HCT116 (cell line): ENCODE measurements at regions of chr14 and their contacts with region 1.

Region 1: DNA sequence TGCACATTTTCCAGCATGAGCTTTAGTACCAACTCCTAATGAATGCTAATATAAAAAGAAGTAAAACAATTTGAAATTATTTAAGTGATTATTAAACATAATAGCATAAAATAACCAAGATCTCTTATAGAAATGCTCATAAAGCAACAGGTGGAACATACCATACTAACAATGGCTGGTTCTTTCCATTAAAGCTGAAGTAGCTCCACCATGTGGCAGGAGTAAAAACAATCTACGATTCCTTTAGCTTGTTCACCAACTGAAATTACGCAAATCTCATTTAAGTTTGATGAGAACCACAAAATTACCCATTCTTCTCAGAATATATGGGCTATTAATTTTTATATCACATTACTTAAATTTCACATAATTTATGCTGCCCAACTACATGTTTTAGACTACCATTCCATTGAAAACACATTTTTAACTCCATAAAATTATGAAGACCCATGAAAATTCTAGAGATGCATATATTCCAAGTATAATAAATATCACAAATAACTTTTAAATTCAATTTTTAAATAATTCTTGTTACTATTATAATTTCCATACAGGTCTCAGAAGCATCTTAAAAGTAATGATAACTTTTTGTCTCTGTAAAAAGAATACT is 213.6 kb downstream of the DAD1 start:
- DNase-seq: peak; percentile 53
- ATAC-seq: peak; percentile 49; the same call in 1 of the 2 replicates
- H3K4me3 ChIP-seq: no peak overlapping the region
- H3K27ac ChIP-seq: no peak overlapping the region
- H3K4me1 ChIP-seq: no peaks in the 10 kb centered on the region
- H3K27me3 ChIP-seq: peaks cover 56% of the 10 kb centered on the region
- CTCF ChIP-seq: peak; percentile 63 to 71 (median 65)
- POLR2A ChIP-seq: no peak
- RAD21 ChIP-seq: peak; percentile 65

Region 2: DNA sequence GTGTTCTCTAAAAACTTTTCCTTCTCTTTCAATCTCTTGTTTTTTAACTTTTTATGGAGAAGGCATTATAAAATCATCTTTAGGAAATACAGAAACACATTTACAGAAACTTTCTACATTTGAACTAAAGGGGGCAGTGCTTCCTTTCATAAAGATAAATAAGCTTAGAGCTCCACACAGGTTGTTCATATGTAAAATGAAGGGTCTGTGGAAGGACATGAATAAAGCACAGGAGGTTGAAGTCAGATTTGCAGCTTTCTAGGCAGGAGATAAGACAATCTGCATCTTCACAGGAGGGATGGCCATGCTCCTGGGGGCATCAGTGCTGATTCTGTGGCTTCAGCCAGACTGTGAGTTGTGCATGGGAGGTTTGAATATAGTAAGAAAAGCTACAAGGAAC is 212.4 kb before region 1 on chr14:
- CTCF ChIA-PET with region 1: interaction called, 11 read pairs
- POLR2A ChIA-PET with region 1: no interaction called
- RAD21 ChIA-PET with region 1: no interaction called
- intact Hi-C with region 1: no loop called
- DNase-seq: no peak
- ATAC-seq: no peak
- H3K4me3 ChIP-seq: no peak overlapping the region
- H3K27ac ChIP-seq: no peak overlapping the region
- H3K4me1 ChIP-seq: no peaks in the 10 kb centered on the region
- H3K27me3 ChIP-seq: peaks cover 38% of the 10 kb centered on the region; the same call in 1 of the 2 replicates
- CTCF ChIP-seq: peak in 1 of 3 experiments; percentile 44; a peak in 2 of 6 replicates
- POLR2A ChIP-seq: no peak
- RAD21 ChIP-seq: peak; percentile 19; the same call in 1 of the 2 replicates

Region 3: GRCh38 chr14:22221508-22221907 is 153.9 kb before region 1 on chr14:
- CTCF ChIA-PET with region 1: interaction called, 14 read pairs
- POLR2A ChIA-PET with region 1: no interaction called
- RAD21 ChIA-PET with region 1: no interaction called
- intact Hi-C with region 1: loop called (anchors 10 kb)
- DNase-seq: peak; percentile 12
- ATAC-seq: no peak
- H3K4me3 ChIP-seq: no peak overlapping the region
- H3K27ac ChIP-seq: no peak overlapping the region
- H3K4me1 ChIP-seq: no peaks in the 10 kb centered on the region
- H3K27me3 ChIP-seq: peaks cover 16% of the 10 kb centered on the region
- CTCF ChIP-seq: peak; percentile 4 to 58 (median 46); a peak in 4 of 6 replicates
- POLR2A ChIP-seq: no peak
- RAD21 ChIP-seq: no peak

Region 4: GRCh38 chr14:22319526-22320361 is 55.7 kb before region 1 on chr14:
- CTCF ChIA-PET with region 1: interaction called, 113 read pairs
- POLR2A ChIA-PET with region 1: no interaction called
- RAD21 ChIA-PET with region 1: interaction called, 11 to 13 read pairs
- intact Hi-C with region 1: loop called (anchors 1 kb)
- DNase-seq: peak; percentile 53
- ATAC-seq: peak; percentile 93
- H3K4me3 ChIP-seq: no peak overlapping the region
- H3K27ac ChIP-seq: no peak overlapping the region
- H3K4me1 ChIP-seq: no peaks in the 10 kb centered on the region
- H3K27me3 ChIP-seq: peaks cover 50% of the 10 kb centered on the region
- CTCF ChIP-seq: peak; percentile 60 to 79 (median 68); a peak in 5 of 6 replicates
- POLR2A ChIP-seq: no peak
- RAD21 ChIP-seq: peak; percentile 63

Region 5: DNA sequence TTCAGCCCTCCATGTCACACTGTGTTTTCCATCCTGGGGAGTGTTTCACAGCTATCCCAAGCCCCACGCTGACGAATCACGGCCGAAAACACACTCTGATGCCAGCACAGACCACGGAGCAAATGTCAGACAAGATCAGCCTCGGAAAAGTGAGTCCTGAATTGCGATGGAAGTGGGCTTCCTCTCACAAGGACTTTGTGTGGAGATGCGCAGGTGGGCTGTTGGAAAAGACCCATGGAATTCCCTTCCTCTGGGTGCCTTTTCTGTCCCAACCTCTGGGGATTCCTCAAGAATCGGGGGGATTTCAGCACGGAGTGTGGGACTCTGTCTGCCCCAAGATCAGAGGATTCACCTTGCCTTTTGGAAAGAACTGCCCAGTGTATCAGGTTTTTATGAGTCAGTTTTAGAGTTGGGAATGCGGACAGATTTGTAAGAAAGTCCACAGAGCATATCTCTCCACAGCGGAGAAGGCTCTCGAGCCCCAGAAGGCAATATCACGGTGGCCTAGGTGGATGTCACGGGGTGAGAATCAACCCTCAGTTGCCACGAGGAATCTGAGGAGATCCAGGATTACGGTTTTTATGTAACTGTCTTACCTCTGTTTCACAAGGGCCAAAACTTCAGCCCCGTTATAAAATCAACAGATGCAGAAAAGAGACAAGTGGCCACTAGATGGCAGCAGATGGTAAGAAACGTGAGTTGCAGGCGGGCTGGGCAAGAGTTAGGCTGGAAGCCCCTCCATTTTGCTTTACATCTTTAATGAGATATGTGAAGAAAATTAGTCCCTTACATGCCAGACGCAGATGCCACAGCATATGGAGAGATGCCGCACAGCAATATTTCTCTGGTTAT is 11.7 kb after region 1 on chr14:
- CTCF ChIA-PET with region 1: interaction called, 11 read pairs
- POLR2A ChIA-PET with region 1: no interaction called
- RAD21 ChIA-PET with region 1: no interaction called
- intact Hi-C with region 1: no loop called
- DNase-seq: peak; percentile 53
- ATAC-seq: peak; percentile 75
- H3K4me3 ChIP-seq: no peak overlapping the region
- H3K27ac ChIP-seq: no peak overlapping the region
- H3K4me1 ChIP-seq: no peaks in the 10 kb centered on the region
- H3K27me3 ChIP-seq: peaks cover 83% of the 10 kb centered on the region
- CTCF ChIP-seq: peak; percentile 64 to 89 (median 66)
- POLR2A ChIP-seq: no peak
- RAD21 ChIP-seq: peak; percentile 77